ENCODE measurements at regions of chr2 and their contacts with region 1.

Region 1: DNA sequence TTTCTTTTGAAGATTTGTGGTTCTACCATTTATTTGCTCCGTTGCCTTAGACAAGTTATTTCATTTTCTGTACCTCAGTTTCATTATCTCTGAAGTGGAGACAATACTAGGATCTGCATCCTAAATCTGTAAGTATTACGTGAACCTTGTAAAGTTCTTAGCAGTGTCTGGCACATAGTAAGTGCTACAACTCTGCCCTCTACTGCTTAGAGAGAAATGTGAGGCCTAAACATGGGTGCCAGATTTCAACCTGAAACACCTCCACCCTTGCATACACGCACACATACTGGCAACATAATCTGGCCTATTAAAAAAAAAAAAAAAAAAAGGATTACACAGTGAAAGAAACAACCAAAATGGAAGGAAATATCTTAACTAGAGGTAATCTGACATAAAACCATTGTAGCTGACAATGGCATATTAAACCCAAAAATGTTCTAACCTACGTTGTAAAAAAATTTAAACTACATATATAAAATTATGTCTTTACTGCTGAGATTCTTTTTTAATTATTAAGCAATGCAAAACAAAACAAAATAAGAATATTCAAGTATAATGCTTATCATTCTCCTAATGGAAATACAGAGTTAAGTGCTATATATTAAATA is 132.6 kb downstream of the MAP2 start:
- DNase-seq: no peak
- H3K4me3 ChIP-seq: no peak overlapping the region
- H3K27ac ChIP-seq: no peak overlapping the region
- H3K4me1 ChIP-seq: no peaks in the 10 kb centered on the region
- H3K27me3 ChIP-seq: no peaks in the 10 kb centered on the region
- CTCF ChIP-seq: peak in 4 of 11 experiments; percentile 21 to 40 (median 25)
- POLR2A ChIP-seq: no peak

Region 2: DNA sequence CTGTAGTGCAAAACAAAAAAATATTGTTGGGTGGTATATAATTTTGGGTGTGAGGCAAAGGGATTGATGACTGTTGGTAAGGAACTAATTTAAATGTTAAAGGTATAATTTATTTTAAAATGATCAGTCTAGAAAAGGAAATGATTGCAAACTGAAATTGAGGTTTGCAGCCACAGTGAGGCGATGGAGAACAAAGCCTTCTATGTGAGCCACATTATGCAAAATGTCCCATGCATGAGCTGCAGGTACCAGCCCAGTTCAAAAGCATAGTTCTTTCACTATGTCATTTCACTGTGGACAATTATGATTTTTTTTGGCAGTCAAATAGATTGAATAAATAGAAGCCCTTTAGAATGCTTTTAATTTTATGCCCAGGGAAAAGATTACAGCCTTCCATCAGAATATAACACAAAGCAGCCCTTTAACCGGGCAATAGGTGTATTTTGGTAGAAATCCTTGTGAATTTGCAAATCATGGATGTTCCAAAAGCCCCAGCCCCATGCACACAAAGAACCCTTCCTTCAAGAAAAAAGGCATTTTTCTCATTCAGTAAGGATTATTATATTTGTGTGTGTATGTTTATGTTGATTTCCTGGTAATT is 130.9 kb before region 1 on chr2:
- intact Hi-C with region 1: loop called (anchors 5 kb)
- DNase-seq: no peak
- H3K4me3 ChIP-seq: peak overlapping the region in 1 of 8 donors; percentile 70
- H3K27ac ChIP-seq: no peak overlapping the region
- H3K4me1 ChIP-seq: peaks cover 0 to 28% (median 18%) of the 10 kb centered on the region in 6 donors
- H3K27me3 ChIP-seq: peaks cover 0 to 36% (median 3%) of the 10 kb centered on the region in 7 donors
- CTCF ChIP-seq: peak in 4 of 11 experiments; percentile 15 to 43 (median 18)
- POLR2A ChIP-seq: no peak

Region 3: DNA sequence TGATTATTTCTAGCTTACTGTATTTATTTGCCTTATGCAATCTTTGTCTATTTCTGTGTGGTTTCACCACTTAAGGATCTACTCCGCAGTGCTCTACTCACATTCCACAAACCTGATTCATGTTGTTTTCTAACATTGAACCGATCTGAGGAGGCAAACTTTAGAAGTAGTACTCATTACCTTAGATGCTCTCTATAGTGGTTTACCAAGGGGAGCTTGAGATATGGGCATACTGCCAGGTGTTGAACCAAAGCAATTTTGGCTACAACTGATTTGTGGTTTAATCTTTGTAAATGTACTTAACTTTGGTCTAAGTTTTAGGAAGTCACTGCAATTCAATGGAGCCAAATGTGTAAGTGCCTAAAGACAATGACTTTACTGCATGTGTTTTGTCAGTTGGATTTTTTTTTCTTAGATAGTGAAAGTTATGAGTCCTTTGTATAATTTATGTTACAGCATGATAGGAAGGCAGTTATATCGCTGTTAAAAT is 82.5 kb before region 1 on chr2:
- intact Hi-C with region 1: no loop called
- DNase-seq: no peak
- H3K4me3 ChIP-seq: no peak overlapping the region
- H3K27ac ChIP-seq: no peak overlapping the region
- H3K4me1 ChIP-seq: peaks cover 0 to 7% (median 0%) of the 10 kb centered on the region in 6 donors
- H3K27me3 ChIP-seq: no peaks in the 10 kb centered on the region
- CTCF ChIP-seq: no peak
- POLR2A ChIP-seq: no peak

Measured in spleen (tissue), 13 donors.